Panc1 (cell line): ENCODE measurements at regions of chr6 and their contacts with region 1.

Region 1: GRCh38 chr6:37127961-37128862 is 41.7 kb upstream of the PIM1 start:
- DNase-seq: no peak
- ATAC-seq: peak; percentile 53
- H3K4me3 ChIP-seq: no peak overlapping the region
- H3K27ac ChIP-seq: peak overlapping the region; percentile 98
- H3K4me1 ChIP-seq: peaks cover 59% of the 10 kb centered on the region
- H3K27me3 ChIP-seq: no peaks in the 10 kb centered on the region
- CTCF ChIP-seq: no peak

Region 2: GRCh38 chr6:36985808-36986703 is 142.2 kb before region 1 on chr6 and contains the start of gene MTCH1:
- CTCF ChIA-PET with region 1: no interaction called
- POLR2A ChIA-PET with region 1: no interaction called
- in situ Hi-C with region 1: no loop called
- intact Hi-C with region 1: no loop called
- DNase-seq: no peak
- ATAC-seq: peak; percentile 95
- H3K4me3 ChIP-seq: peak within 1 kb of the TSS; percentile 72 to 97
- H3K27ac ChIP-seq: peak within 1 kb of the TSS; percentile 94
- H3K4me1 ChIP-seq: peaks cover 23% of the 10 kb centered on the region
- H3K27me3 ChIP-seq: no peaks in the 10 kb centered on the region
- CTCF ChIP-seq: no peak
- total RNA-seq, gene MTCH1: 223 TPM

Region 3: DNA sequence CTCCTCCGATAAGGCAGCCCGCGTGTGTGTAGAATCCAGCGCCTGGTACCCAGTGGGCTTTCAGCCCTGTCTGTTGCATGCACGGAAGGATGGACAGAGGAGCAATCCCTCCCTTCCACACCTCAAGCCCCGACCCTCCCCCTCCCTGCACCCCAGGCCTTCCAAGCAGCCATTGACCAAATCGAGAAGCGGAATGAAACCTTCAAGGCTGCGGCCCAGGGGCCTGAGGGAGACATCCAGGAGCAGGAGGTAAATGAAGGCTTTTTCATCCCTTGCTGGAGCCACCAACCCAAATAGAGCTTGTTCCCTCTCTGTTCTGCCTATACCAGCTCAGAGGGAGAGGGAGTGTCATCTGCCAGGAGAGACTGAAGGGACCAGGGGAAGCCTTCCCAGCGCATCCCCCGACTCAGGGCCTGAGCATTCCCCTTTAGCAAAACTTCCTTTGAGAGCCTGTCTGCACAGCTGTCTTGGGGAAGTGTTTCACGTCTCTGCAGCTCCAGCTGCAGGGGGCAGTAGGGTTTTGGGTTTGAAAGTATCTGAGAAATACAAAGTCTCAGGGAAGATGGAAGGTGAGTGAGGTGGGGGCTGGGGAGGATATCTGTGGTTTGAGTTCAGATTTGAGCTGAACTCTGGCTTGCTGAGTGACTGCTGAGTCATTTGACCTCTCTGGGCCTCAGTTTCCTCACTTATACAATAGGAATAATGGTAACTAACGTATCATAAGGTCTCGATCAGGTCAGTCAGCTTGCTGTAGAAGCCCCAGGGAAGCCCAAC is 106.7 kb before region 1 on chr6:
- CTCF ChIA-PET with region 1: no interaction called
- POLR2A ChIA-PET with region 1: no interaction called
- in situ Hi-C with region 1: no loop called
- intact Hi-C with region 1: no loop called
- DNase-seq: no peak
- ATAC-seq: 0 out of 2 replicates have a peak, but pooled peaks have one; percentile 27
- H3K4me3 ChIP-seq: no peak overlapping the region
- H3K27ac ChIP-seq: no peak overlapping the region
- H3K4me1 ChIP-seq: peaks cover 25% of the 10 kb centered on the region
- H3K27me3 ChIP-seq: no peaks in the 10 kb centered on the region
- CTCF ChIP-seq: peak; percentile 75

Region 4: GRCh38 chr6:37059344-37060206 is 68.6 kb before region 1 on chr6:
- CTCF ChIA-PET with region 1: no interaction called
- POLR2A ChIA-PET with region 1: no interaction called
- in situ Hi-C with region 1: no loop called
- intact Hi-C with region 1: loop called (anchors 5 kb)
- DNase-seq: peak; percentile 90
- ATAC-seq: peak; percentile 92
- H3K4me3 ChIP-seq: peak overlapping the region in 1 of 2 experiments; percentile 36; a peak in 2 of 4 replicates
- H3K27ac ChIP-seq: peak overlapping the region; percentile 93
- H3K4me1 ChIP-seq: peaks cover 51% of the 10 kb centered on the region
- H3K27me3 ChIP-seq: no peaks in the 10 kb centered on the region
- CTCF ChIP-seq: no peak; the same call in 1 of the 2 replicates

Region 5: GRCh38 chr6:37083243-37084138 is 44.7 kb before region 1 on chr6:
- CTCF ChIA-PET with region 1: no interaction called
- POLR2A ChIA-PET with region 1: interaction called, 11 read pairs
- in situ Hi-C with region 1: no loop called
- intact Hi-C with region 1: no loop called
- DNase-seq: no peak
- ATAC-seq: peak; percentile 65; the same call in 1 of the 2 replicates
- H3K4me3 ChIP-seq: no peak overlapping the region
- H3K27ac ChIP-seq: peak overlapping the region; percentile 14; the same call in 1 of the 2 replicates
- H3K4me1 ChIP-seq: no peaks in the 10 kb centered on the region
- H3K27me3 ChIP-seq: no peaks in the 10 kb centered on the region
- CTCF ChIP-seq: no peak

Region 6: DNA sequence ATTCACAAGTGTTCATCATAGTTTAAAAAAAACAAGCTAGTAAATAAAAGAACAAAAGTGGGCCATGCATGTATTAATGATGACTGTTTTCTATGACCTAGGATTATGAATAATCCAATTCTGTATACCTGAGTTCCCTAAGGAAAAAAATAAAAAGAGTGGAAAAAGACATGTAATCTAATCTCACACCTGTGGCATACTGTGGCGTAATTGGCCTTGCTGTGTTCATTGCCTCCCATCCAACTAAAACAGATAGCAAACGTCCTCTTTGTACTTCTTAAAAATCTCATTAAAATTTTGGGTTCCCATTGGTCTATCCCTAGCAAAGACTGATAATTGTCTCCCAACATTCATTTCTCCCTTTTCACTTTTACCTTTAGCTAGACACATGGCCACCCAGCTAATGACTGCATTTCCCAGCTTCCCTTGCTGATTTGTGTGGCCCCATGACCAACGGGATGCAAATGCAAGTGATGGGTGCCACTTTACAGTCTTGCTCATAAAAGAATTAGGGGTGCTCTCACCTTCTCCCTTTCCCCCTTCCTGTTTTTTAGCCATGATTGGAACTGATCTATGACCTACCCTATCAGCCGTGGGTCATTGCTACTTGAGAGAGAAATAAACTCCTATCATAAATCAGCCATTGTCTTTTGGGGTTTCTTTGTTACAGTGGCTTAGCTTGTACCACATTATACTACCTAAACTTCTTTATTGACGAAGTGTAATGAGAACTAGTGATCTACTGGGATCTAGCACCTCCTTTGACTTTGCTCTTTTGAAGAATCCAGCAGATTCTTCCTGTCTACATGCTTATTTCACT is 97.3 kb after region 1 on chr6:
- CTCF ChIA-PET with region 1: no interaction called
- POLR2A ChIA-PET with region 1: interaction called, 10 read pairs
- in situ Hi-C with region 1: no loop called
- intact Hi-C with region 1: no loop called
- DNase-seq: no peak
- ATAC-seq: no peak
- H3K4me3 ChIP-seq: no peak overlapping the region
- H3K27ac ChIP-seq: no peak overlapping the region
- H3K4me1 ChIP-seq: peaks cover 10% of the 10 kb centered on the region; the same call in 1 of the 2 replicates
- H3K27me3 ChIP-seq: no peaks in the 10 kb centered on the region
- CTCF ChIP-seq: no peak